Activated T-helper 1 cell treated with anti-CD3 and anti-CD28 coated beads, Interleukin-12 subunit alpha, Interleukin-12 subunit beta, Interleukin-2, Interleukin-4 antibody, amounts not matched to agents 30 ng/mL and 10 ng/mL and 1 ng/mL, durations not matched to agents 14 hours and 24 hours and 36 hours (primary cell): ENCODE measurements at regions of chr17 and their contacts with region 1.

Region 1: DNA sequence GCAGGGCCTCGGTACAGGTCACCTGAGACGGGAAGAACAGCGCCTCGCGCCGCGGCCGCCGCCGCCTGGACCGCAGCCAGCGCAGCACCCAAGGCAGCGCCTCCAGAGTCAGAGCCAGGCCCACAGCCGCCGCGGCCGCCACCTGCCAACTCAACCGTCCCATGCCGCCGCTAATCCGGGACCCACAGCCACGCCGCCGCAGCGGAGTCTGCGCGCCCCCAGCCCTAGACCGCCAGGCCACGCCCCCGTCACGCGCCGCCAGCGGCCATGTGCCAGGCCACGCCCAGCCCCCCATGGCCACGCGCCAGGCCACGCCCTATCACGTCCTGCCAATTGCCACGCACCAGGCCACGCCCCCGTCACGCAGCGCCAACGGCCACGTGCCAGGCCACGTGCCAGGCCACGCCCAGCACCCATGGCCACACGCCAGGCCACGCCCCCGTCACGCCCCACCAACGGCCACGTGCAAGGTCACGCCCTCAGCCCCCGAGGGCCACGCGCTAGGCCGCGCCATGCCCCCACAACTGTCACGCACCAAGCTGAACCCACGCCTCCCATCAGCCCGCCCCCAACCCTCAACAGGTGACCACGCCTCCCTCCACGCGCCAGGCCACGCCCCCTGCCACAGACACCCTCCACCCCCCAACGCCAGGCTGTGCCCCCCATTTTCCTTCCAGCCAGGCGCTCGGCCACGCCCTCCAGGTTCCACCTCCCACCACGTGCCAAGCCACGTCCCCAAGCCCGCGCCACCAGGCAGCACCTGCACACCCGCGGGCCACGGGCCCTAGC is at the start of gene PLD6:
- DNase-seq: peak; percentile 80
- H3K4me3 Mint-ChIP-seq: peak within 1 kb of the TSS; percentile 87
- H3K27ac Mint-ChIP-seq: peak within 1 kb of the TSS; percentile 93
- H3K4me1 Mint-ChIP-seq: no peaks in the 10 kb centered on the region
- H3K27me3 Mint-ChIP-seq: no peaks in the 10 kb centered on the region
- total RNA-seq, gene PLD6: 18.5 and 20.5 TPM in 2 replicates

Region 2: DNA sequence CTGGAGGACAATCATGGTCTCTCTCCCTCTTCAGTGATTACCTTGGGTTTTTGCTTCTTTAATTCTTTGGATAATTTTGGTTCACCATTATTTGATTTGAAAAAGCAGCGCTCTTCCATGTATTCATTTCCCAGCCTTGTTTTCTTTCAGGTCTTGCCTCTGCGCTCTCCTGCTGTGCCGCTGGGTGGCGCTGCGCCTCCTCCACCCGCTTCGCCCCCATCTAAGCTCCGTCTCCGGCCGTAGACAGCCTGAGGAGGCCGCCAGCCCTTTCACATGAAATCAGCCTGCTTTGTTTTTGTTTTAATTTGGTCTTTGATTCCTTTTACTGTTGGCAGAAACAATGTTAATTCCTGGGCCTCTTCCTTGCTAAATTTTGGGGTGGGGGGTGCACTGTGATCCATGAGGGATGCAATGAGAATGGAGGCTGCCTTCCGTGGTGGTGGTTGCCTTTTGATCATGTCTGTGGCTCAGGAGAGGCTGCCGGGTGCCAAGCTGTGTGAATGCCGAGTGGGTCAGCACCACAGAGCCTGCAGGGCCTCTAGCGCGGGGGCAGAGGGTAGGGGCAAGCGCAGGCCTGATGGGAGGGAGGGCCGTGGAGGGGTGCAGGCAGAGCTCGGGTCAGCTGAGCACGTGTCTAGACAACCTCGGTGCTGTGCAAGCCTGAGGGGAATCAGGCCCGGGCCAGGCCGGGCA is 64.3 kb before region 1 on chr17:
- intact Hi-C with region 1: loop called (anchors 2 kb)
- DNase-seq: peak; percentile 30
- H3K4me3 Mint-ChIP-seq: no peak overlapping the region
- H3K27ac Mint-ChIP-seq: peak overlapping the region; percentile 56
- H3K4me1 Mint-ChIP-seq: peaks cover under 1% of the 10 kb centered on the region
- H3K27me3 Mint-ChIP-seq: no peaks in the 10 kb centered on the region

Region 3: DNA sequence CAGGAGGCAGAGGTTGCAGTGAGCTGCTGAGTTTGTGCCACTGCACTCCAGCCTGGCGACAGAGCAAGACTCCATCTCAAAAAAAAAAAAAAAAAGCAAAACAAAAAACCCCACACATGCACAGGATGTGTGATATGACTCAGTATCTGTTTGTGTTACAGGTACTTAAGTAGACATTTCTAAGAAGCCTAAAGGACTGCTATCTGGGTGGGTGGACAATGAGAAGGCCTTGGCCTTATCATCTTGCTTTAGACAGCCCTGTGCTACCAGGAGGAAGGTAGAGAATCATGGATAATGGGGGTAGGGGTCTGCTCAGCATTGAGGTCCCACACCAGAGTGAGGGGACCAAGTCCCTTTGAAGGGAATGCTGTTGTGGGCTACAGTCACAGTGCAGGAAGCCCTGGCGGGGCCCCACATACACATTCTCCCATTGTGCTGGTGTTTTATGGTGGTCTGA is 26.9 kb before region 1 on chr17:
- intact Hi-C with region 1: loop called (anchors 1 kb)
- DNase-seq: peak; percentile 39
- H3K4me3 Mint-ChIP-seq: peak overlapping the region; percentile 84
- H3K27ac Mint-ChIP-seq: peak overlapping the region; percentile 97
- H3K4me1 Mint-ChIP-seq: peaks cover 76% of the 10 kb centered on the region
- H3K27me3 Mint-ChIP-seq: no peaks in the 10 kb centered on the region

Region 4: DNA sequence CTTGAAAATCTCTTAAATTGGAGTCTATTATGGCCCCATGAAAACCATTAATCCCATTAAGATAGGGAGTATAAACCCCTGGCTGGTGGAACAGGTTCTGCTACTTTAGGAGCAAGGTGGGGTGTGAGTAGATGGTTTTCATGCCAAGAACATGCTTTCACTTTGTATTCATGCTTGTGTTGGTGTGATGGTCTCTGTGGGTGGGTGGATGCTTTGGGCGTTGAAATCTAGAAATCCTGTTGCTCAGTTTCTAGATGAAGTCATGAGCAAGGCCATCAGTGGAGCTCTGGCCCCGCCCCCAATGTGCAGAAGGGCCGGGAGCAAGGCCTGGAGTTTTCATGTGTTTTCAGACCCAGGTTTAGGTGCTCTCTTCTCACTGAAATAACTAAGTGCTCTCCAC is 20.3 kb before region 1 on chr17:
- intact Hi-C with region 1: loop called (anchors 1 kb)
- DNase-seq: peak; percentile 55
- H3K4me3 Mint-ChIP-seq: peak overlapping the region; percentile 78
- H3K27ac Mint-ChIP-seq: peak overlapping the region; percentile 88
- H3K4me1 Mint-ChIP-seq: peaks cover 57% of the 10 kb centered on the region
- H3K27me3 Mint-ChIP-seq: no peaks in the 10 kb centered on the region